Ovary (tissue), 10 donors: ENCODE measurements at regions of chr6 and their contacts with region 1.

Region 1: GRCh38 chr6:149028767-149029405 is 282.1 kb downstream of the UST start:
- DNase-seq: peak in 4 of 5 donors; percentile 47 to 80 (median 72)
- H3K4me3 ChIP-seq: no peak overlapping the region
- H3K27ac ChIP-seq: no peak overlapping the region
- H3K4me1 ChIP-seq: peaks cover 13% of the 10 kb centered on the region
- H3K27me3 ChIP-seq: no peaks in the 10 kb centered on the region
- CTCF ChIP-seq: peak; percentile 65 to 89 (median 84)
- EP300 ChIP-seq: no peak
- POLR2A ChIP-seq: no peak

Region 2: DNA sequence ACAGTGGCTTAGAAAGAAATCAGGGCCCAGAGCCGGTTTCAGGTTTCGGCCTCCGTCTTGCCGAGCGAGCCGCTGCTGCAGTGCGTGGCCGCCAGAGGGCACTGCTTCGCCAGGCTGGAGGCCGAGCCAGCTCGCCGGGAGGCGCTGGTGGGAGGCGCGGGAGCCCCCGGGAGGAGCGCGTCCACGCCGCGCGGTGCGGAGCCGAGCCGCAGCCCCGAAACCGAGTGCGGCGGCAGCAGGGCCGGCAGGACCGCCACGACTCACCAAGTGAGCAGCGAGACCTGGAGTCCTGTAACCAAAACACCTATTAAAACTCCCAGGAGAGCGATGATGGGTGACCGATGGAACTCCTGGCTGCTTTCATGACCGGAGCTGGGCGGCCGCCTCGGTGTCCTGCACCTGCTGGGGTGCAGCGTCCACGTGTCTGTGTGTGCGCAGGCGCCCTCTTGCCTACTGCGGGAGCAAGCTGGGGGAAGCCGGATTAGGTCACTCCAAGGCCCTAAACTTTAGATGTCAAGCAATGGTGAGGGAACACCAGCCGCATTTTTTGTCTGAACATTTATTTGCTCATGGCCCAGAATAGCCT is 468.9 kb before region 1 on chr6:
- intact Hi-C with region 1: loop called in 1 of 4 experiments (anchors 10 kb)
- DNase-seq: peak; percentile 78 to 89 (median 83)
- H3K4me3 ChIP-seq: peak overlapping the region; percentile 47
- H3K27ac ChIP-seq: no peak overlapping the region
- H3K4me1 ChIP-seq: peaks cover 1% of the 10 kb centered on the region
- H3K27me3 ChIP-seq: no peaks in the 10 kb centered on the region
- CTCF ChIP-seq: peak; percentile 90 to 93 (median 91)
- EP300 ChIP-seq: no peak
- POLR2A ChIP-seq: no peak

Region 3: DNA sequence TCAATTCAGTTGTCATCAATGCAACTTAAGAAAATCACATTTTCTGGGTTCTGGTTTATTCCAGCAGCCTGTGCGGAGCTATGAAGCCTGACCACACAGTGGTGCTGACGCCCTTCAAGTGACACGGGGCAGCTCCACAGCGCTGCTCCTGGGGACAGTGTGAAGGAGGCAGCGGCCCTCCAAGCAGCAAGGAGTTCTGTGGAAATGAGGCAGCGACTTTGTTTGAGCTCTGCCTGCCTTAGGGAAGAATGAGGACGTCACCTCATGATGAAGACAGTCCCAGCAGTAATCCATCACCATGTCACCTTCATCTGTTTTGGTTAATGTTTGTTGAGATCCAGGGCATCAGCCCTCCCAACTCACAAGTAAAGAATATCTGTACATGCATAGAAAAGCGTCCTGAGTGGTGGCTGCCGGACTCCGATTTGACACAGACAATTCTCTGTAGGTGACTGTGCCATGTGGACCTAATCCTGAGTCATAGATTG is 450.6 kb before region 1 on chr6:
- intact Hi-C with region 1: loop called in 1 of 4 experiments (anchors 10 kb)
- DNase-seq: peak; percentile 69 to 82 (median 77)
- H3K4me3 ChIP-seq: no peak overlapping the region
- H3K27ac ChIP-seq: no peak overlapping the region
- H3K4me1 ChIP-seq: no peaks in the 10 kb centered on the region
- H3K27me3 ChIP-seq: no peaks in the 10 kb centered on the region
- CTCF ChIP-seq: peak; percentile 66 to 86 (median 71)
- EP300 ChIP-seq: no peak
- POLR2A ChIP-seq: no peak

Region 4: GRCh38 chr6:149082286-149082707 is 53.4 kb after region 1 on chr6:
- intact Hi-C with region 1: loop called in 1 of 4 experiments (anchors 5 kb)
- DNase-seq: peak; percentile 75 to 87 (median 85)
- H3K4me3 ChIP-seq: no peak overlapping the region
- H3K27ac ChIP-seq: no peak overlapping the region
- H3K4me1 ChIP-seq: peaks cover 12% of the 10 kb centered on the region
- H3K27me3 ChIP-seq: no peaks in the 10 kb centered on the region
- CTCF ChIP-seq: peak; percentile 17 to 68 (median 68)
- EP300 ChIP-seq: no peak
- POLR2A ChIP-seq: no peak

Region 5: DNA sequence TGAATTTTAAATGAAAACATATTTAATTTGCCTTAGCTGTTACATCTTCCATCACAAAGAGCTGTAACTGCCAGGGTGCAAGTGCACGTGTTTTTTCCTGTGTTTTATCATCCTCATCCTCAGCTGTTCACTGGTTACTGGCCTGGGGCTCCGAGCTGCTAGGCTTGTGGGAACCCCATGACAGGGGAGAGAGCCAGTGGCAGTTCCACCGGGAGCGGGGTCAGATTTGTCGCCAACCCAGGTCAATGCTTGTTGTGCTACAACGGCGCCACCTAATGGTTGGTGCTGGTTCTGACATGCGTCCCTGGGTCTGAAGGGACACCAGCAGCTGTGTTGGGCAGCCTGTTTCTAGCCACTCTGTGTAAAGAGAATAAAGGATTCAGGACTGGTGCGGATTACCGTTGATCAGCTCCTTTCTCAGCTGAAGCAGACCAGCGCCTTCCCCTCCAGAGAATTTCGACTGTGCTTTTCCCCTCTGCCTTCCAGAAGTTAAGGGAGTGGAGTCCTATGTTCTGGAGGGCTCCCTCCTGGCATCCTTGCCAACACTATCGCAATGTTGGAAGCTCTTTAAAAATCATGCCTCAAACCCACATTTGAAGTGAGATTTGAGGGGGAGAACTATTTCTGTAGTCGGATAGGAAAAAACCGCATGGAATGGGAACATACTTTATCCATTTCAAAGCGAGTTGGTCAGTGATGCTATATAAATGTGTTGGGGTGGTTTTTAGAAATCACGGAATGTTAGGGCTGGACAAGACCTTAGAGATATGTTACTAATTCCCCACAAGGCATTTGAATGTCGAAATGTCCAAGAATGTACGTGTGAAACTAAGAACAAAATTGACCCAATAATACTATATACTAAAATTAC is 403.3 kb after region 1 on chr6:
- intact Hi-C with region 1: loop called (anchors 5 to 10 kb)
- DNase-seq: peak; percentile 82 to 91 (median 90)
- H3K4me3 ChIP-seq: no peak overlapping the region
- H3K27ac ChIP-seq: no peak overlapping the region
- H3K4me1 ChIP-seq: peaks cover 2% of the 10 kb centered on the region
- H3K27me3 ChIP-seq: no peaks in the 10 kb centered on the region
- CTCF ChIP-seq: peak; percentile 85 to 92 (median 89)
- EP300 ChIP-seq: no peak
- POLR2A ChIP-seq: no peak

Region 6: DNA sequence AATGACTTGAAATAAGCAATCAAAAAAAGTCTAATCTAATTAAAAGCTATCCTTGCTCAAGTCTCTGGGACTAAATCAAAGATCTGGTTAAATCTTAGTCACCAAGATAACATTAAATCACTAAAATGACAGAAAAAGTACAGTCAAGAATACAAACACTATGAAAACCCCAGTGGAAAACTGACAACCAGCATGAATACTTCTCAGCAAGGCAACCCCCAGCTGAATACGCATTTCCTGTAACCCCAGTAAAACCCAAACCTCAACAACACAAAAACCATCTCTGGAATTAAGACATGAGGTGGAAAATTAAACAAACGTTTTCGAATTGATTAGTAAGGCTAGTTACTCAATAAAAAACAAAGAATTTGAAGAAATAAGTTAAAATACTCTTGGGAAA is 479.6 kb after region 1 on chr6:
- intact Hi-C with region 1: loop called in 1 of 4 experiments (anchors 10 kb)
- DNase-seq: no peak
- H3K4me3 ChIP-seq: no peak overlapping the region
- H3K27ac ChIP-seq: no peak overlapping the region
- H3K4me1 ChIP-seq: no peaks in the 10 kb centered on the region
- H3K27me3 ChIP-seq: no peaks in the 10 kb centered on the region
- CTCF ChIP-seq: no peak
- EP300 ChIP-seq: no peak
- POLR2A ChIP-seq: no peak

Region 7: DNA sequence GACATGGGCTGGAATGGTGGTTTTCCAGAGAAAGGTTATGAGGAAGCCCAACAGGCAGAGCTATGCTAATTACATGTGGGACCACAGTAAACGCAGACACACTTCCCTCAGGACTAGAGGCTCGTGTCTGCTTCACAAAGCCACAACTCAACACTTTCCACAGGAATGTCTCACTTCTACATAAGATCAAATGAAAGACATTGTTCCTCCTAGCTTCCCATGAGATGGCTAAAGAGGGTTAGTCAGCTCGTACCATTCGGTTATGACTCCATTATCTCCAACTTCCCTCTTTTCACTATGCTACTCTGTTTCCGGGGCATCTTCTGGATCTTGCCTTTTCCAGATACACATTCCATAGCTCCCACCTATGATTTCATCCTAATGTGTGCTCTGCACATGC is 485.0 kb after region 1 on chr6:
- intact Hi-C with region 1: loop called in 2 of 4 experiments (anchors 5 to 10 kb)
- DNase-seq: no peak
- H3K4me3 ChIP-seq: no peak overlapping the region
- H3K27ac ChIP-seq: no peak overlapping the region
- H3K4me1 ChIP-seq: no peaks in the 10 kb centered on the region
- H3K27me3 ChIP-seq: no peaks in the 10 kb centered on the region
- CTCF ChIP-seq: no peak
- EP300 ChIP-seq: no peak
- POLR2A ChIP-seq: no peak